Right ventricle myocardium inferior (tissue), 1 donor: ENCODE measurements at regions of chr11 and their contacts with region 1.

Region 1: GRCh38 chr11:121591405-121592033 is 138.8 kb upstream of the SORL1-AS1 start:
- DNase-seq: no peak
- ATAC-seq: peak; percentile 58

Region 2: DNA sequence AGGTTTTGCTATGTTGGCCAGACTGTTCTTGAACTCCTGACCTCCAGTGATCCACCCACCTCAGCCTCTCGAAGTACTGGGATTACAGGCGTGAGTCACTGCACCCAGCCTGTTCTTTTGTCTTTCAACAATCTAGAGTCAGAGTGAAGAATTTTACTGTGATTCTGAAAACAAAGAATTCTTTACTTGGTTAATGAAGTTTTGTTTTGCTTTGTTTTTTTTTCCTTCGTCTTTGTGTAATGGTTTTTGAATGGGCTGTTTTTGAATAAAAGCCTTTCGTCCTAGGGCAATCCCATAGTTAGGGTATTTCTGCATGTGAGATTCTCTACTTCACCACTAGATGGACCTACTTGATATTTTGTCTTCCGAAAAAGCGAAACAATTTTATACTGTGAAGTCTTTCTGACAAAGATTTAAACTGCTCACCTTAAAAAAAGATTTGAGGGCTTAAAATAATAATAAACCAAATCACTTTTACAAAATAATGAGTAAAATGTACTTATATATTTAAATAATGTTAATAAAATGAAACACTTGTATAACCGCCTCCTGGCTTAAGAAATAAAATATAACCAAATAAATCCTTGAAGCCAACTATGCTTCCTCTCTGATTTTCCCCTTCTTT is 342.4 kb before region 1 on chr11:
- intact Hi-C with region 1: loop called (anchors 2 kb)
- DNase-seq: no peak
- ATAC-seq: peak; percentile 52

Region 3: GRCh38 chr11:121318848-121319834 is 272.4 kb before region 1 on chr11:
- intact Hi-C with region 1: loop called (anchors 1 kb)
- DNase-seq: no peak
- ATAC-seq: peak; percentile 71